Activated CD4-positive, alpha-beta T cell treated with anti-CD3 and anti-CD28 coated beads for 36 hours (primary cell): ENCODE measurements at regions of chr10 and their contacts with region 1.

Region 1: GRCh38 chr10:9024210-9024609 is 969.7 kb downstream of the GATA3 start:
- DNase-seq: no peak
- ATAC-seq: peak; percentile 72
- H3K4me3 Mint-ChIP-seq: no peak overlapping the region
- H3K27ac Mint-ChIP-seq: peak overlapping the region; percentile 81
- H3K4me1 Mint-ChIP-seq: peaks cover 47% of the 10 kb centered on the region
- H3K27me3 Mint-ChIP-seq: peaks cover 12% of the 10 kb centered on the region

Region 2: DNA sequence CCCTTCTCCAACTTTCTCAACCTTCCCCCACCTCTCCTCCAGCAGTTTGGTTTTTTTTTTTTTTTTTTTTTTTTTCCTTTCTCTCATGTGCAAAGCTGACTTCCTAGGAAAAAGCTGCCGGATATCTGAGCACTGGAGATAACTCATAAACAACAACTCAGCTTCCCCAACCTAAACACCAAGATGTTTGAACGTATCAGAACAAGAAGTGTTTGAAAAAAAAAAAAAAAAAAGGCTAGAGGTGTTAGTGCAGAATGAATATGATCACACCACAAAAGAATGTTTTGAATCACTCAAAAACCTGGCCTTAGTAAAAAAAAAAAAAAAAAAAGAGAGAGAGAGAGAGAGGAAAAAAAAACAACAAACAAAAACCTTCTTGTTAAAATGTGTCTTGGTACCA is 958.6 kb before region 1 on chr10:
- CTCF ChIA-PET with region 1: no interaction called
- POLR2A ChIA-PET with region 1: no interaction called
- intact Hi-C with region 1: loop called (anchors 5 to 10 kb)
- DNase-seq: no peak
- ATAC-seq: peak; percentile 43
- H3K4me3 Mint-ChIP-seq: peak overlapping the region; percentile 64
- H3K27ac Mint-ChIP-seq: peak overlapping the region; percentile 90
- H3K4me1 Mint-ChIP-seq: peaks cover 95% of the 10 kb centered on the region
- H3K27me3 Mint-ChIP-seq: no peaks in the 10 kb centered on the region

Region 3: DNA sequence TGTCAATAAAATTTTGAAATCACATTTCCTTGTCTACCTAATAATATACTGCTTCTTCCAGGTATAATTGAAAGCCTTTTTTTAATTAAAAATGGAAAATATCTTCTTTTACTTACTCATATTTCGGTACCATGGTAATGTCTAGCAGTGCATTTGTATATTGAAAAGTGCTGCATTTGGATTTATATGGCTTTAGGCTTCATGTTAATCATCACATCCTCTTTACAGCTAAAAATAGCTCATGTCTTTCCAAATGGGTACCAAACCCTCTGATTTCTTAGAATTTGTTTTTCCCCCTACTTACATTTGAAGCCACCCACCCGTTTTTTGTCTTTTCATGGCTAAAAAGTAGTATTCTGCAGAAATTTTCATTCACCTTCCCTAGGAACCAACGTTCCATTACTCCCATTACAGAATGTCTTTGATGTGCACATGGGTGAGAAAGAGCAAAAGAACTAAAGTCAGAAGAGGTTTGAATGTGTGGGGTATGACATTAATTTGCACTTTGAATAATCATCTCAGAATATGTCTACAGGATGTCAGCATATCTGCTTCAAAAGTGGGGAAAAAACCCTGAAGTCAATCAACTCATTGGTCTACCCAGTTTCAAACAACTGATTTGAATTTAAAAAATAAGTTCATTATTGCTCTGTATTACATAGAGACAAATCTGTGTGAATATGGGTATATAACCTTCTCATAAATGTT is 33.8 kb before region 1 on chr10:
- CTCF ChIA-PET with region 1: no interaction called
- POLR2A ChIA-PET with region 1: no interaction called
- intact Hi-C with region 1: loop called (anchors 1 to 5 kb)
- DNase-seq: no peak
- ATAC-seq: peak; percentile 82
- H3K4me3 Mint-ChIP-seq: peak overlapping the region; percentile 5
- H3K27ac Mint-ChIP-seq: peak overlapping the region; percentile 62
- H3K4me1 Mint-ChIP-seq: peaks cover 63% of the 10 kb centered on the region
- H3K27me3 Mint-ChIP-seq: peaks cover 5% of the 10 kb centered on the region

Region 4: GRCh38 chr10:9010093-9010492 is 14.1 kb before region 1 on chr10:
- CTCF ChIA-PET with region 1: interaction called, 4 read pairs
- POLR2A ChIA-PET with region 1: no interaction called
- intact Hi-C with region 1: loop called in 1 of 2 experiments (anchors 1 kb)
- DNase-seq: peak; percentile 42
- ATAC-seq: peak; percentile 80
- H3K4me3 Mint-ChIP-seq: peak overlapping the region; percentile 30
- H3K27ac Mint-ChIP-seq: peak overlapping the region; percentile 78
- H3K4me1 Mint-ChIP-seq: peaks cover 64% of the 10 kb centered on the region
- H3K27me3 Mint-ChIP-seq: peaks cover 2% of the 10 kb centered on the region

Region 5: GRCh38 chr10:9091530-9092093 is 67.4 kb after region 1 on chr10:
- CTCF ChIA-PET with region 1: no interaction called
- POLR2A ChIA-PET with region 1: no interaction called
- intact Hi-C with region 1: loop called (anchors 1 to 2 kb)
- DNase-seq: peak; percentile 57
- ATAC-seq: peak; percentile 97
- H3K4me3 Mint-ChIP-seq: peak overlapping the region; percentile 27
- H3K27ac Mint-ChIP-seq: peak overlapping the region; percentile 52
- H3K4me1 Mint-ChIP-seq: peaks cover 51% of the 10 kb centered on the region
- H3K27me3 Mint-ChIP-seq: peaks cover 3% of the 10 kb centered on the region